ENCODE measurements at regions of chr1 and their contacts with region 1.

Region 1: GRCh38 chr1:82819234-82819633 is 1018.5 kb downstream of the ADGRL2 start:
- DNase-seq: no peak
- H3K4me3 ChIP-seq: no peak overlapping the region
- CTCF ChIP-seq: no peak

Region 2: DNA sequence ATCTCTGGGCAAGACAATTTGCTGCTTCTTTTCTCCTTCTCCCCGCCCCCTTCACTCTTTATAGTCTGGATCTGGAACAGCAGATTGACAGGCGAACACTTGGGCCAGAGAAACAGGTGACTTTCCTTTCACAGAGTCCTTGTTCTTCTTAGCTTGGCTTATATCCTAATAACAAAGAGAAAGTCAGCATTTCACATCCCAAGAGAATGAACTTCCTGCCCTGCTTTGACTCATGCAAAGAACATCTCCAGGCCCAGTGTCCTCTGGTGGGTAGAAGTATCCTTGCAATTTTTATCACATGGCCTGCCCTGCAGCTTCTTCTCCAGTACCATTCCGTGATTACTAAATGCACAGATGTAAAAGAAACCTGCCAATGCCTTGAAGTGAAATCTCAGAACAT is 254.1 kb before region 1 on chr1:
- in situ Hi-C with region 1: no loop called
- DNase-seq: peak; percentile 56
- H3K4me3 ChIP-seq: no peak overlapping the region
- CTCF ChIP-seq: peak; percentile 37

Region 3: GRCh38 chr1:82867781-82868180 is 48.5 kb after region 1 on chr1:
- in situ Hi-C with region 1: no loop called
- DNase-seq: no peak
- H3K4me3 ChIP-seq: no peak overlapping the region
- CTCF ChIP-seq: no peak

Region 4: GRCh38 chr1:82879701-82880305 is 60.6 kb after region 1 on chr1:
- in situ Hi-C with region 1: loop called (anchors 5 kb)
- DNase-seq: no peak
- H3K4me3 ChIP-seq: no peak overlapping the region
- CTCF ChIP-seq: no peak